ENCODE measurements at regions of chr1 and their contacts with region 1.

Region 1: DNA sequence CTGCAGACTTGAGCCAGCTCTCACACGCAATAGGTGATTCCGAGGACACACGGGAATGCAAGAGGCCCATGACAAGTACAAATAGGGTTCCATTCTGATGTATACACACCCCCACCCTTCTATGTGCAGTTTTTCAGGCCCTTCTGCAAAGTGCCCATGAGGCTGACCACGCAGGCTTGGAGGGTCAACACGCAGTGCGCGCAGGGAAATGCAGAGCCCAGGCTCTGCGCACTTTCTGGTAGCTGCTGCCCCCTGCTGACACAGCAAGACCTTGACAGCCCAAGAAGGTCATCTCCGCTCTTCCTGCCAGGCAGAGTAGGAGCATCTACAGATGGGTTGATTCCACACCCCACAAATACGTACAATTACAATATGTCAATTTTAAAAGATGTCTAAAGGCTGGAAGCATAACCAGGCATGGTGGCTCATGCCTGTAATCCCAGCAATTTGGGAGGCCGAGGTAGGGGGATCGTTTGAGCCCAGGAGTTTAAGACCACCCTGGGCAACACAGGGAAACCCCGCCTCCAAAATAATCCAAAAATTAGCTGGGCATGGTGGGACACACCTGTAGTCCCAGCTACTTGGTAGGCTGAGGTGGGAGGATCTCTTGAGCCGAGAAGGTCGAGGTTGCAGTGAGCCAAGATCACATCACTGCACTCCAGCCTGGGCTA is 18.5 kb downstream of the SH3BP5L start:
- DNase-seq: peak; percentile 73
- H3K4me3 ChIP-seq: no peak overlapping the region
- H3K27ac ChIP-seq: no peak overlapping the region
- H3K4me1 ChIP-seq: peaks cover 25% of the 10 kb centered on the region
- CTCF ChIP-seq: peak; percentile 92

Region 2: DNA sequence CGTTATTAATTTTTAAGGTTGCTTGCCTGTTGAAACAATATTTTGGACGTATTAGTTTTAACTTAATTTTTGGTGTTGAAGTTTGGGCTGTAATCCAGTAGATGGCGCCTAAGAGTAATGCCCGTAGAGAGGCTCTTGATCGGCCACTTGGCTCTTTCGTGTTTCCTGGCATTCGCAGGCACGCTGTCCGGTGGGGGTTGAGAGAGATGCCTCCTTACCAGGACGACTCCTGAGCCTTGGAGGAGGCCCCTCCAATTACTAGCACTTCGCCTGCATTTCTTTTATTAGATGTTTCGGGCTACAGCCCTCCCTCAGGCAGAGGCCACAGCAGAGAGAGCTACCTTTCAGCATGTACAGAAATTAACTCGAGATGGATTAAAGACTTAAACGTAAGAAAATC is 564.0 kb before region 1 on chr1:
- CTCF ChIA-PET with region 1: no interaction called
- POLR2A ChIA-PET with region 1: no interaction called
- intact Hi-C with region 1: loop called (anchors 5 kb)
- DNase-seq: peak; percentile 46
- H3K4me3 ChIP-seq: no peak overlapping the region
- H3K27ac ChIP-seq: no peak overlapping the region
- H3K4me1 ChIP-seq: no peaks in the 10 kb centered on the region
- CTCF ChIP-seq: peak; percentile 84

Region 3: GRCh38 chr1:248622570-248623001 is 184.6 kb before region 1 on chr1:
- CTCF ChIA-PET with region 1: interaction called, 15 read pairs
- POLR2A ChIA-PET with region 1: interaction called, 16 read pairs
- intact Hi-C with region 1: loop called (anchors 1 kb)
- DNase-seq: peak; percentile 62
- H3K4me3 ChIP-seq: no peak overlapping the region
- H3K27ac ChIP-seq: no peak overlapping the region
- H3K4me1 ChIP-seq: no peaks in the 10 kb centered on the region
- CTCF ChIP-seq: peak; percentile 83

Region 4: GRCh38 chr1:248696261-248696660 is 110.9 kb before region 1 on chr1:
- CTCF ChIA-PET with region 1: no interaction called
- POLR2A ChIA-PET with region 1: interaction called, 3 read pairs
- intact Hi-C with region 1: loop called (anchors 2 kb)
- DNase-seq: peak; percentile 48
- H3K4me3 ChIP-seq: no peak overlapping the region
- H3K27ac ChIP-seq: no peak overlapping the region
- H3K4me1 ChIP-seq: no peaks in the 10 kb centered on the region
- CTCF ChIP-seq: peak; percentile 55

Region 5: GRCh38 chr1:248703674-248704073 is 103.5 kb before region 1 on chr1:
- CTCF ChIA-PET with region 1: no interaction called
- POLR2A ChIA-PET with region 1: interaction called, 3 read pairs
- intact Hi-C with region 1: loop called (anchors 2 kb)
- DNase-seq: no peak
- H3K4me3 ChIP-seq: no peak overlapping the region
- H3K27ac ChIP-seq: no peak overlapping the region
- H3K4me1 ChIP-seq: no peaks in the 10 kb centered on the region
- CTCF ChIP-seq: peak; percentile 58

Region 6: DNA sequence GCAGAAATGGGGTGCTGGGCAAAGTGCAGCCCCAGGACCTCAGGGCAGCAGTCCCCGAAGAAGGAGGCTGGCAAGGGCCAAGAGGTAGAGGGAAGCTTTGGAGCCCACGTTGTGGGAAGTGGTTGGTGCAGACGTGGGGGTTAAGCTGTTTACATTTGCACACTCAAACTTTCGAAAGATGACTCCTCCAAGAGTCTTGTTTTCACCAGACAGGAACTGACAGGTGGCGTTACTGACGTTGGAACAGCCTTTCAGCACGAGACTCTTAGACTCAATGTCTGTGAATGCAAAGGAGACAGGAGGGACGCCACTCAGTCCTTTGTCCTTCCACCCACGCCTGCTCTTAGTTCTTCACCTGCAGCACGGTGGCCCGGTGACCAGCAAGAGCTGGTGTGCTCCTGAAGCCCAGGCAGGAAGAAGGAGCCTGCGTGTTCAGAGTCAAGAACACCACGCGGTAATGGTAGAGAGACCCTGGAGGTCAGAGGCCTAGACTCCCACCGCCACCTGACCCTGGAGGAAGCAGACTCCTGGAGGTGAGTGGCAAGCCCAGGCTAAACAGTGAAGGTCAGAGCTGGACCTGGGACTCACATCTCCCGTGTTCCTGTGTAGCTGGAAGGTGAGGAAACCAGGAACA is 67.5 kb before region 1 on chr1:
- CTCF ChIA-PET with region 1: no interaction called
- POLR2A ChIA-PET with region 1: no interaction called
- intact Hi-C with region 1: no loop called
- DNase-seq: peak; percentile 29
- H3K4me3 ChIP-seq: no peak overlapping the region
- H3K27ac ChIP-seq: no peak overlapping the region
- H3K4me1 ChIP-seq: no peaks in the 10 kb centered on the region
- CTCF ChIP-seq: no peak

Region 7: GRCh38 chr1:248793592-248793991 is 13.6 kb before region 1 on chr1:
- CTCF ChIA-PET with region 1: interaction called, 3 read pairs
- POLR2A ChIA-PET with region 1: interaction called, 12 read pairs
- intact Hi-C with region 1: no loop called
- DNase-seq: no peak
- H3K4me3 ChIP-seq: no peak overlapping the region
- H3K27ac ChIP-seq: no peak overlapping the region
- H3K4me1 ChIP-seq: no peaks in the 10 kb centered on the region
- CTCF ChIP-seq: no peak

Region 8: DNA sequence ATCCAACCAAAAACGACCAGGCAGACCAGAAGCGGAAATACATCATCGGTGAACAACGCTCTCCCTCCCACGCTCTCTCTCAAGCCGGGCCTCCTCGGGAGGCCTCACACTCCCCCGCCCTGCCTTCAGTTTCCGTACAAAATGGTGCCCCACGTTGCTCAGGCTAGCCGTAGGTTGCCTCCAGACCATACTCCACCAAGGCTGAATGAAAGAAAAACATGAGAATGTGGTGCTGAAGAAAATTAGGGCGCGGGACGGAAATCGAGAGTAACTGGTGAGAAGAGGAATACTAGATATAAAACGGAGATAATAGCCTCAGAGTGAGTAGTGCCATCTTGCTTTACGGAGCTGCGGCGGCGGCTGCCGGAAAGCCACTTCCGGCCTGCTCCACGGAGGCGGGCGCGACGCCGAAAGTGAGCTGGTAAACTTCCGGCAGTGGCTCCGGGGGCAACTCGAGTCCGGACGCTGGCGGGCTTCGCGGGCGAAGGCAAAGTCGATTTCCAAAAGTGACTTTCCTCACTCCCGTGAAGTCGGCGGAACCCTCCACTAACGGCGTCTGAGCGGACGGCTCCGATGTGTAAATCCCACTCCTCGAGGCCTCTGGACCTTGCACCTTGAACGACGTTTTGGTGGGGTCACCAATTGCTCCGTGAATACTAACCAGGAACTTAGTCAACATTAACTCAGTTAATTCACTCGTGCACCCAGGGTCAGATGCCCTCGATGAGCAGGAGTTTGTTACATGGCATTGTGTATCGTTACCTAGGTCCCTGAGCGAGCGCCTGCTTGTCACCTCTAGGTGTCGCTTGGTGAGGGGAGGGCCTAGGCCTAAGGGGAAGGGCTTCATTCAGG is 18.9 kb after region 1 on chr1 and contains the start of gene SH3BP5L:
- CTCF ChIA-PET with region 1: no interaction called
- POLR2A ChIA-PET with region 1: interaction called, 17 read pairs
- intact Hi-C with region 1: no loop called
- DNase-seq: peak; percentile 95
- H3K4me3 ChIP-seq: peak within 1 kb of the TSS; percentile 73
- H3K27ac ChIP-seq: peak within 1 kb of the TSS; percentile 78
- H3K4me1 ChIP-seq: peaks cover 40% of the 10 kb centered on the region
- CTCF ChIP-seq: peak; percentile 95
- total RNA-seq, gene SH3BP5L: 14.5 and 16.9 TPM in 2 replicates